ENCODE measurements at regions of chr6 and their contacts with region 1.

Region 1: GRCh38 chr6:27518881-27519795 is 46.2 kb upstream of the ZNF184 start:
- DNase-seq: peak; percentile 73
- H3K4me3 ChIP-seq: peak overlapping the region; percentile 73
- H3K27ac ChIP-seq: peak overlapping the region; percentile 31
- H3K4me1 ChIP-seq: peaks cover 7% of the 10 kb centered on the region
- CTCF ChIP-seq: peak; percentile 88

Region 2: DNA sequence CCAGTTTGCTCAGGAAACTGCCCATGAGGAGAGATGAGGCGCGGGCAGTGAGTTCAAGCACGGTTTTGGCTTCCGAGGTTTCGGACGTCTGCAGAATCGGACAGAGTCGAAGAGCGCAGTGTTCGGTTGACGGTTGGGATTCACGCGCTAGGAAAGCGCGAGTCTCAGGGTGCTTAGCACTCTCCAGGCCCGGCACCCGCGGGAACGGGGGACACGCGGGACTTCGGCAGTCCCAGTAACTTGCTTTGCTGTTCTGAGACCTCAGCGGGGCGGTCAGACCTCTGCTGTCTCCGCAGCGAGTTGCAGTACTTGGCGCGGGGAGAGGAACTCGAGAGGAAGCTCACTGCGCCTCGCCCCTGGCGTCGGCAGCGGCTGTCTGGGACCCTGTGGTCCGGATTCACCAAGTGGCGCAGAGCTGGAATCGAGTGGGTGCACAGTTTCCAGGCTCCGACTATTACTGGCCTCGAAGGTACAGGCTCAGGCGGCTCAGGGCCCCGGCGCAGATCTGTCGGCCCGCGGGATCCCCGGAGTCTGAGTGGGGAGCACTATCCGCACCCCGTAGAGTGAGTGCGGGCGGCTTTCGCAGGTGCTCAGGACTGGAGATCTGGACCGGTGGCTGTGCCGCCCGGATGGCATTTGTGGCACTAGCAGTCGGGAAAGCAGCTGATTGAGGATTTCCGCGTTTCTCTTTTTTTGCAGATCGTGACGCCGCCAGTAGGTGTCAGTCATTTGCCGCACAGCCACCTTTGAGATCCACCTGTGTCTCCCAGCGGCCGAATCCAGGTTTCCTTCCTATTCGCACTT is 206.8 kb before region 1 on chr6 and contains the start of gene POM121L2:
- CTCF ChIA-PET with region 1: no interaction called
- POLR2A ChIA-PET with region 1: interaction called, 3 read pairs
- intact Hi-C with region 1: loop called (anchors 5 kb)
- DNase-seq: peak; percentile 65
- H3K4me3 ChIP-seq: peak within 1 kb of the TSS; percentile 62
- H3K27ac ChIP-seq: no peak within 1 kb of the TSS
- H3K4me1 ChIP-seq: no peaks in the 10 kb centered on the region
- CTCF ChIP-seq: peak; percentile 83
- total RNA-seq, gene POM121L2: not detected in 2 replicates

Region 3: DNA sequence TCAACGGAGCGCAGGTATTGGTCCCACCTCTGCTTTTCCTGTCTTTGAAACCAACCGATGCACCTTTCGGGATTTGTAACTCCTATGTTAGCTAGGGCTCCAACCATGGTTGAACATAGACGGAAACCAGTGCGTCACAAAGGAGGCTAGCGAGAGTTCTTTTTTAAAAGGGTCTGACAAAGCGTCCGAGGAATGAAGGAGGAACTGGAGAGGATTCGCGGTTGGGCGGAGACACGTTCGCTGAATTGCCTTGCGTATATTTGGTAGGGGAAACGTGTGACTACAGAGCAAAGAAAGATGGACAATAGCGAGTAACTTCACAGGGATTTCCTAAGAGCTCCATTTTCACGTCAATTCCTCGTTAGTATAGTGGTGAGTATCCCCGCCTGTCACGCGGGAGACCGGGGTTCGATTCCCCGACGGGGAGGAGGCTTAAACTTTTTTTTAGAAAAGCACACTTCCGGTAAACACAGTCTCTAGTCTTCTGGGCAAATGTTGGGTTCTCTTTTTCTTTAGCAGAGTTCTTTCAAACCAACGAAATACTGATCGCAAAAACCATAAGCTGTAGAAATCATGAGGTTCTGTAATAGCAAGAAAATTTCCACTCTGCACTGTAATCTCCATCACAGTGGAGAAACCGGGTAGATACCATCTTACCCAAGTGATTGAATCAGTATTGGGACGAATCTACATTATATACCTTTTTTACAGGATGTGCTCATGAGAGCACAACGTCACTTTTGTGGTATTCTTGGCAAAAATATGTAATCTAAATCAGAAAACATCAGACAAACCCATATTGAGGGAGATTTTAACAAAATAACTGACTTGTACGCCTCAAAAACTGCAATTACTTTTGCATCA is 39.6 kb before region 1 on chr6:
- CTCF ChIA-PET with region 1: no interaction called
- POLR2A ChIA-PET with region 1: interaction called, 3 read pairs
- intact Hi-C with region 1: loop called (anchors 5 kb)
- DNase-seq: peak; percentile 85
- H3K4me3 ChIP-seq: peak overlapping the region; percentile 73
- H3K27ac ChIP-seq: peak overlapping the region; percentile 79
- H3K4me1 ChIP-seq: peaks cover 15% of the 10 kb centered on the region
- CTCF ChIP-seq: no peak

Region 4: DNA sequence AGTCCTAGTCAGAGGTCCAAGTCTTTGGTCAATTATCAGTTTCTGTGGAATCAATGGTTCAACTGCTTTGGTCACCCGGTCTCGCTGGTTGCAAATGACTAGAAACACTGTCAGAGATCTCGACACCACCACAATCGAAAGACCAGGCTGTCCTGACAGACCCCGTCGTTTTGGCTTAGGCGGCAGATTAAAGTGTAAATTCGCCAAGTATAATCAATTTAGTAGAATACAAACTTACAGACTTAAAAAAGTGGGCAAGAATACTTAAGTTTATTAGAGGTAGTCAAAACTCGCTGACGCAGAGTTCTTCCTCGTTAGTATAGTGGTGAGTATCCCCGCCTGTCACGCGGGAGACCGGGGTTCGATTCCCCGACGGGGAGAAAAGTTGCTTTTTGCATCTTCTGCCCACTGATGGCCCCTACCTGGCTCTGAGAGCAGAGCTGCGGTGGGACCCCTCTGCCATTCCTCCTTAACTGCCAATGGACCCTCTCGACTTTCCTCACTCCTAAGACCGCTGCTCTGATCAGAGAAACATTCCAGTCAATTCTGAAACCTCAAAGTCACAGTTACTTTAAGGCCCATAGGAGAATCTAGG is 15.6 kb before region 1 on chr6:
- CTCF ChIA-PET with region 1: interaction called, 3 read pairs
- POLR2A ChIA-PET with region 1: interaction called, 3 read pairs
- intact Hi-C with region 1: loop called (anchors 1 kb)
- DNase-seq: peak; percentile 74
- H3K4me3 ChIP-seq: peak overlapping the region; percentile 74
- H3K27ac ChIP-seq: peak overlapping the region; percentile 22
- H3K4me1 ChIP-seq: peaks cover 12% of the 10 kb centered on the region
- CTCF ChIP-seq: no peak

Region 5: GRCh38 chr6:27687154-27688013 is 168.2 kb after region 1 on chr6:
- CTCF ChIA-PET with region 1: interaction called, 4 read pairs
- POLR2A ChIA-PET with region 1: interaction called, 3 read pairs
- intact Hi-C with region 1: loop called (anchors 2 kb)
- DNase-seq: peak; percentile 87
- H3K4me3 ChIP-seq: peak overlapping the region; percentile 67
- H3K27ac ChIP-seq: peak overlapping the region; percentile 41
- H3K4me1 ChIP-seq: no peaks in the 10 kb centered on the region
- CTCF ChIP-seq: peak; percentile 83

Region 6: DNA sequence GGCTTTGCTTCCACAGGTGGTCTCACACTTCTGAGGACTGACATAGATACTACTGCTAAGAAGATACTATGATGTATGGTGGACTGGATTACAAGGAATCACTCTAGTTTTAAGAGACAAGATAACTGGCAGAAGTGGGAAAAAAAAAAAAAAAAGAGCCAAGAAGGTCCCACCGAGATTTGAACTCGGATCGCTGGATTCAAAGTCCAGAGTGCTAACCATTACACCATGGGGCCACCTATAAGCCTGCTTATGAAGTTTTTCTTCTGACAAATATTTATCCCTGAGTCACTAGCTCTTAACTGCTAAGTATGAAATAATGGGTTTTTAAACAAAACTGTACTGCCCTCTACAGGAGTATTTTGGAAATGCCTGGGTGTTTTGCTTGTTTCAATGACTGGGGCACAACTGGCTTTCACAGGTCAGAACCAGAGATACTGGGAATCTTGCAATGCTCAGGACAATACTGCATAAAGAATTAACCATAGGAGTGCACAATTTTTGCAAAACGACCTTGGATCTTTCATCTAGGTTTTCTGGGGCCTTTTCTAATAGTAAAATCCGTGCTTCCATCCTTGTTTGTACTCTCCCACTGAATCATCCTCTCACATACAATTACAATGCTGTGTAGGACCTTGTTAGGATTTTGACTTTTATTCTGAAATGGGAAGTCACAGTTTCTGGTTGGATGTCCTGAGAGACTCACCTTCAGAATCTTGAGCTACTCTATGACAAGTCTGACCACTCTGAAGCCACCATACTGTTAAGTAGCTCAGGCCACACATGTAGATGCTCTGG is 276.8 kb after region 1 on chr6:
- CTCF ChIA-PET with region 1: no interaction called
- POLR2A ChIA-PET with region 1: interaction called, 4 read pairs
- intact Hi-C with region 1: loop called (anchors 2 kb)
- DNase-seq: peak; percentile 88
- H3K4me3 ChIP-seq: peak overlapping the region; percentile 33
- H3K27ac ChIP-seq: peak overlapping the region; percentile 32
- H3K4me1 ChIP-seq: peaks cover 33% of the 10 kb centered on the region
- CTCF ChIP-seq: peak; percentile 88

Measured in OCI-LY7 (cell line).